ENCODE measurements at regions of chr6 and their contacts with region 1.

Region 1: GRCh38 chr6:168269455-168270243 is 49.9 kb downstream of the DACT2 start:
- DNase-seq: no peak

Region 2: GRCh38 chr6:168206186-168206585 is 63.5 kb before region 1 on chr6:
- intact Hi-C with region 1: no loop called
- DNase-seq: peak; percentile 88

Region 3: GRCh38 chr6:168328086-168328485 is 58.4 kb after region 1 on chr6:
- intact Hi-C with region 1: loop called in 1 of 2 experiments (anchors 2 kb)
- DNase-seq: no peak